ENCODE measurements at regions of chr4 and their contacts with region 1.

Region 1: GRCh38 chr4:2281575-2282343 is 19.9 kb upstream of the MXD4 start:
- DNase-seq: peak; percentile 81
- H3K4me3 ChIP-seq: peak overlapping the region; percentile 9
- H3K27ac ChIP-seq: peak overlapping the region; percentile 51
- H3K4me1 ChIP-seq: peaks cover 16% of the 10 kb centered on the region
- CTCF ChIP-seq: peak; percentile 62

Region 2: GRCh38 chr4:2231082-2231481 is 50.7 kb before region 1 on chr4:
- CTCF ChIA-PET with region 1: no interaction called
- POLR2A ChIA-PET with region 1: no interaction called
- intact Hi-C with region 1: no loop called
- DNase-seq: no peak
- H3K4me3 ChIP-seq: no peak overlapping the region
- H3K27ac ChIP-seq: no peak overlapping the region
- H3K4me1 ChIP-seq: no peaks in the 10 kb centered on the region
- CTCF ChIP-seq: no peak

Region 3: GRCh38 chr4:2354118-2354517 is 72.4 kb after region 1 on chr4:
- CTCF ChIA-PET with region 1: no interaction called
- POLR2A ChIA-PET with region 1: no interaction called
- intact Hi-C with region 1: loop called (anchors 1 kb)
- DNase-seq: peak; percentile 36
- H3K4me3 ChIP-seq: no peak overlapping the region
- H3K27ac ChIP-seq: no peak overlapping the region
- H3K4me1 ChIP-seq: no peaks in the 10 kb centered on the region
- CTCF ChIP-seq: peak; percentile 69